ENCODE measurements at regions of chr10 and their contacts with region 1.

Region 1: DNA sequence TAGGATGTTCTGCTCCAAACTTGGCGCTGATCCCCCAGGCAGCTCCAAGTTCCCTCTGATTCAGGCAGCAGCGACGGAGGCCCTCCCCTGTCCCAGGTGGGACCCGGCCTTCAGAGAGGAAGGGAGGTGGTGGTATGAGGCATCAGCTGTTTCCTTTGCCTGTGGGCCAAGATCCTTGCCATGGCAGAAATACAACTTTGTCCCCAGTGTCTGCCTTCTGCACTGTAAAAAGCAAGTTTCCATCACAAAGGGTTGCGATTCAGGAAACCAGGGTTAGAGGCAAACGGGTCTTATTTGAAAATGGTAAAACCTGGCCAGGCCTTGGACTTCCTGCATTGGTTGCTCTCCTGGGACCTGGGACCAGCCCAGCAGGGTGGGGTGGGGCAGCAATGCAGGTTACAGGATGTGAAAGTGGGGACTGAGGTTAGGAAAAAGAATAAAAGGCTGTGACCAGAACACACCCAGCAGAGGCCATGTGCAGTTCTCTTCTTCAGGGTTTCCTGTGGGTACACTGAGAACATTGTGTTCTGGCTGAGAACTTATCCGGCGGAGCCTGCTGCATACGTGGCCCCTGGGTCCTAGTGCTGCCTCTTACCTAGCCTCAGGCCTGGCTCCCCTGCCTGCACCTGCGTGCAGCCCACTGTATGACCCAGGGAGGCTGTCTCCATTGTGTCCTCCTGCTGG is 25.1 kb upstream of the DDIT4 start:
- DNase-seq: peak; percentile 96
- H3K4me3 Mint-ChIP-seq: peak overlapping the region; percentile 49
- H3K27ac Mint-ChIP-seq: peak overlapping the region; percentile 88
- H3K4me1 Mint-ChIP-seq: peaks cover 59% of the 10 kb centered on the region
- H3K27me3 Mint-ChIP-seq: no peaks in the 10 kb centered on the region
- CTCF ChIP-seq: no peak

Region 2: GRCh38 chr10:72215652-72216549 is 32.7 kb before region 1 on chr10 and contains the starts of genes ANAPC16 and ASCC1:
- CTCF ChIA-PET with region 1: interaction called, 6 read pairs
- POLR2A ChIA-PET with region 1: interaction called, 24 read pairs
- intact Hi-C with region 1: no loop called
- DNase-seq: peak; percentile 89
- H3K4me3 Mint-ChIP-seq: peak within 1 kb of the TSS; percentile 100
- H3K27ac Mint-ChIP-seq: peak within 1 kb of the TSS; percentile 92
- H3K4me1 Mint-ChIP-seq: peaks cover 6% of the 10 kb centered on the region
- H3K27me3 Mint-ChIP-seq: no peaks in the 10 kb centered on the region
- CTCF ChIP-seq: no peak
- total RNA-seq, gene ANAPC16: 97.0 and 110 TPM in 2 replicates
- total RNA-seq, gene ASCC1: 26.3 and 31.6 TPM in 2 replicates

Region 3: GRCh38 chr10:72229261-72230251 is 19.1 kb before region 1 on chr10:
- CTCF ChIA-PET with region 1: interaction called, 3 read pairs
- POLR2A ChIA-PET with region 1: interaction called, 36 read pairs
- intact Hi-C with region 1: no loop called
- DNase-seq: peak; percentile 91
- H3K4me3 Mint-ChIP-seq: no peak overlapping the region
- H3K27ac Mint-ChIP-seq: peak overlapping the region; percentile 68
- H3K4me1 Mint-ChIP-seq: peaks cover 25% of the 10 kb centered on the region
- H3K27me3 Mint-ChIP-seq: no peaks in the 10 kb centered on the region
- CTCF ChIP-seq: no peak

Region 4: GRCh38 chr10:72238392-72239175 is 10.0 kb before region 1 on chr10:
- CTCF ChIA-PET with region 1: no interaction called
- POLR2A ChIA-PET with region 1: interaction called, 13 read pairs
- intact Hi-C with region 1: no loop called
- DNase-seq: no peak
- H3K4me3 Mint-ChIP-seq: no peak overlapping the region
- H3K27ac Mint-ChIP-seq: no peak overlapping the region
- H3K4me1 Mint-ChIP-seq: peaks cover 27% of the 10 kb centered on the region
- H3K27me3 Mint-ChIP-seq: no peaks in the 10 kb centered on the region
- CTCF ChIP-seq: no peak

Region 5: DNA sequence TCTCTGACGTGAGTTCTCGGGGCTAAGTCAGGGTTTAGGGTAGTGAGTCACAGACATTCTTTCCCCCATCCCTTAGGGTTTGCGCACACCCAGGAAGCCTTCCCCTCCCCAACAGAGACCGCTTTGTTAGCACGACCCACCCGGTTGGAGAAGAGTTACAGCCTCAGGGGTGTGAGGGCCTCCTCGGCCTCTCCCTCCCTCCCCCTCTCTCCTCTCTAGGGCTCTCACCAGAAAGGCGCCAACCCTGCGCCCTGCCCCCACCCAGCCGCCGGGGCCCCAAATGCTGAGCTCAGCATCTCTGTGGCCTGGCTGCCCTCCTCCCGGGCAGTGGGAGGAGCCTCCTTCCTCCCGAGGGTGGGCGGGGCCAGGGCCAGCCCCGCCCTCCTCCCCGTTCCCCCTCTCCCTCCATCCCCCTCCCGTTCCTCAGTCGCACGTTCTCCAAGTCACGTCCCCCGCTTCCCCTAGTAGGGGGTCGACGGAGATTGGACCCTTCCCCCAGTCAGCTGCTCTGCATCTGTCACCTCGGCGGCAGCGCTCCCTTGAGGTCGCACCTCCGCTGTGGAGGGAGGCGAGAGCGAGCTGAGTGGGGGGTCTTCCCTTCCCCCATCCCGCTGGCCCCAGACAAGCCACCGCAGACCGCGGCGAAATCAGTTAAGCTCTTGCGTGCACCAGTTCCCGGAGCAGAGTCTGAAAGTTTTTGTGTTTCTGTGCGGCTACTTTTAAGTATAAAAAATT is 12.1 kb after region 1 on chr10:
- CTCF ChIA-PET with region 1: interaction called, 5 read pairs
- POLR2A ChIA-PET with region 1: interaction called, 143 read pairs
- intact Hi-C with region 1: no loop called
- DNase-seq: peak; percentile 99
- H3K4me3 Mint-ChIP-seq: peak overlapping the region; percentile 53
- H3K27ac Mint-ChIP-seq: peak overlapping the region; percentile 87
- H3K4me1 Mint-ChIP-seq: peaks cover 46% of the 10 kb centered on the region
- H3K27me3 Mint-ChIP-seq: no peaks in the 10 kb centered on the region
- CTCF ChIP-seq: no peak

Measured in MCF 10A (cell line).